WTC11 (cell line): ENCODE measurements at regions of chr5 and their contacts with region 1.

Region 1: GRCh38 chr5:78972654-78973428 is 12.3 kb downstream of the ARSB start:
- DNase-seq: no peak
- ATAC-seq: no peak
- H3K4me3 Mint-ChIP-seq: no peak overlapping the region
- H3K27ac Mint-ChIP-seq: no peak overlapping the region
- H3K4me1 Mint-ChIP-seq: peaks cover 28% of the 10 kb centered on the region
- H3K27me3 Mint-ChIP-seq: no peaks in the 10 kb centered on the region
- CTCF ChIP-seq: no peak

Region 2: DNA sequence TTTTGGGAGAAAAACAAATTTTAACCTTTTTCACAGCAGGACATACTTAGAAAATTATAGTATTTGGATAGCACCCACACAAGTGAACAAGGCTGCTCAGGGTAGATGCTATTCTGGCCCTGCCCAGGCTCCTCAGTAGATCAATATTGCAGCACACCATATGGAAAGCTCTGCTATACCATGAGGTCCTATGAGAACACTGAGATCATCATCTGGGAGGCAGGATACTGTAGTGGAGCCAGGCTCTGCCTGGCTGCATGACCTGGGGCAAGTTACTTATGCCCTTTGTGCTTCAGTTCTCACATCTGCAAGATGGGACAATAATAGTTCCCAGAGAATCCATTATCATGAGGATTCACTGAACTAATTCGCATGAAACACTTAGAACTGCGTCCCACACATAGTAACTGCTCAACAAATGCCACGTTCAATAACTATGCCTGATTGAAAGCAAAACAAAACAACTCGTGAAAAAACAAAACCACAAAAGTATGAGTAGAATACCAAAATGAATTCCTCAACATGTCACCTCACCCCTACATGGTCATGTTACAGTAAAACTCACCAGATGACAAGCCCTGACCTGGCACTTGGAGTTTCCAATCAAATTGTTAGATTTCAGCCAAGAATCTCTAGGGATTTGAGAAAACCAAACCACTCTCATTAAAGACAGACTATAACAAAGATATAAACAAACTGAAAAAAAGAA is 19.6 kb before region 1 on chr5:
- CTCF ChIA-PET with region 1: no interaction called
- POLR2A ChIA-PET with region 1: no interaction called
- DNase-seq: no peak
- ATAC-seq: no peak
- H3K4me3 Mint-ChIP-seq: no peak overlapping the region
- H3K27ac Mint-ChIP-seq: no peak overlapping the region
- H3K4me1 Mint-ChIP-seq: no peaks in the 10 kb centered on the region
- H3K27me3 Mint-ChIP-seq: no peaks in the 10 kb centered on the region
- CTCF ChIP-seq: no peak

Region 3: DNA sequence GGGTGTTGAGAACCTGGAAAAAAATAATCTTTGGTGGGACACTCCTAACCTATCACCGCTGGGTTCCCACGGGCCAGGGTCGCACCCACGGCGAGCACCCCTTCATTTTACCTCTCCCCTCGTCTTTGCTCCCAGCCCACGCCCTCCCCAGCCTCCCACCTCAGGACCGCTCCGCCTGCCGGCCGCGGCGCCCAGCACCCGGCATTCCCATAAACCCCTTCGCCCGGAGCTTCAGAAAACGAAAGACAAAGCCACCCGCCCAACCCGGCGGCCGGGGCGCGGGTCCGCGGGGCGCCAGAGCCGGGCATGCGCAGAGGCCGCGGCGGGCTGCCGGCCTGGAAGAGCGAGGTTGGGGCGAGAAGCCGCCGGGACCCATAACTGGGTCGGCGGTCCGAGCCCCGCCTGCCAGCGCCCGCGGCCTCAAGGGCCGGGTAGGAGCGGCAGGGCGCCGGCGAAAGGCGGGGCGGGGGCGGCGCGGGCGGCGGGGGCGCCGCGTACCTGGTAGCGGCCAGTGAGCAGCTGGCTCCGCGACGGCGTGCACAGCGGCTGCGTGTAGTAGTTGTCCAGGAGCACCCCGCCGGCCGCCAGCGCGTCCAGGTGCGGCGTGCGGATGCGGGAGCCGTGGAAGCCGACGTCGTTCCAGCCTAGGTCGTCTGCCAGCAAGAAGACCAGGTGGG is 11.7 kb after region 1 on chr5:
- CTCF ChIA-PET with region 1: interaction called, 19 read pairs
- POLR2A ChIA-PET with region 1: interaction called, 6 read pairs
- DNase-seq: peak; percentile 84
- ATAC-seq: peak; percentile 92
- H3K4me3 Mint-ChIP-seq: peak overlapping the region; percentile 75
- H3K27ac Mint-ChIP-seq: peak overlapping the region; percentile 92; the same call in 1 of the 2 replicates
- H3K4me1 Mint-ChIP-seq: peaks cover 28% of the 10 kb centered on the region
- H3K27me3 Mint-ChIP-seq: peaks cover 10% of the 10 kb centered on the region
- CTCF ChIP-seq: no peak